MCF 10A (cell line): ENCODE measurements at regions of chr22 and their contacts with region 1.

Region 1: DNA sequence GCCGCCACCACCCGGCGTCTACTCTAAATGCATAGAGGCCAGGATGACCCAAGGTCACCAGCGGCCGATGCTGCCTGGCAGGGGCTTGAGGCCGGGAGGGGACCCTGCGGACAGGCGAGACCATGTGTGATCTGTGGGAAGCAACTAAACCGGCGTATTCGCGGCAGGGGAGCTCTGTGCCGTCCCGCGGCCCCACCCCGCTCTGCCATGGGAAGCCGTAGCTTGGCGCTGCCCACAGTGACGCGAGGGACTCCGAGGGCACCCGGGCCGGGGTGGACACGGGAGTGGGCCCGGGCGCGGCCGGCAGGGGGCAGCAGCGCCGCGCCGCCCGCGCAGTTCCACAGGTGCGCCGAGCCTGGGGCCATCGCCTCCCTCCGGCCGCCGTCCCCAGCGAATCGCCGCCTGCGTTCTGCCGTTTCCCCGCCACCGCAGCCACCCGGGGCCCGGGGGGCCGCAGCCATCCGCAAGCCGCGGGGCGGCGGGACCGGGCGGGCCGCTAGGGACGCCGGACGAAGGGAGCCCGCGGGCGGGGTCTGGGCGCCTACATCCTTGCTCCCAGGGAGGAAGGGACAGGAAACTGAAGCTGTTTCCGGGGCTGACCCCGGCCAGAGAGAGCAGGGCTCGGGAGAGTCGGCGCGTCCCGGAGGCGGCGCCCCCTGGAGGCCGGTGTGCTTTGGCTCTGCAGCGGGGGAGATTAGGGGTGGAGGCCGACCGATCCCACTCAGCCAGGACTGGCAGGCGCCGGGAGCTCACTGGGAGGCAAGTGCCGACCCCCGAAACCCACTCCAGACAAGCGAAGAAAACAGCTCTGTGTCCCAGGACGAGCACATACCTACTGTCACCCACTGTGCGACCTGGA is 12.5 kb upstream of the HDHD5 start:
- DNase-seq: peak; percentile 87
- H3K4me3 Mint-ChIP-seq: peak overlapping the region; percentile 91
- H3K27ac Mint-ChIP-seq: peak overlapping the region; percentile 99
- H3K4me1 Mint-ChIP-seq: peaks cover 6% of the 10 kb centered on the region
- H3K27me3 Mint-ChIP-seq: no peaks in the 10 kb centered on the region
- CTCF ChIP-seq: peak; percentile 56

Region 2: DNA sequence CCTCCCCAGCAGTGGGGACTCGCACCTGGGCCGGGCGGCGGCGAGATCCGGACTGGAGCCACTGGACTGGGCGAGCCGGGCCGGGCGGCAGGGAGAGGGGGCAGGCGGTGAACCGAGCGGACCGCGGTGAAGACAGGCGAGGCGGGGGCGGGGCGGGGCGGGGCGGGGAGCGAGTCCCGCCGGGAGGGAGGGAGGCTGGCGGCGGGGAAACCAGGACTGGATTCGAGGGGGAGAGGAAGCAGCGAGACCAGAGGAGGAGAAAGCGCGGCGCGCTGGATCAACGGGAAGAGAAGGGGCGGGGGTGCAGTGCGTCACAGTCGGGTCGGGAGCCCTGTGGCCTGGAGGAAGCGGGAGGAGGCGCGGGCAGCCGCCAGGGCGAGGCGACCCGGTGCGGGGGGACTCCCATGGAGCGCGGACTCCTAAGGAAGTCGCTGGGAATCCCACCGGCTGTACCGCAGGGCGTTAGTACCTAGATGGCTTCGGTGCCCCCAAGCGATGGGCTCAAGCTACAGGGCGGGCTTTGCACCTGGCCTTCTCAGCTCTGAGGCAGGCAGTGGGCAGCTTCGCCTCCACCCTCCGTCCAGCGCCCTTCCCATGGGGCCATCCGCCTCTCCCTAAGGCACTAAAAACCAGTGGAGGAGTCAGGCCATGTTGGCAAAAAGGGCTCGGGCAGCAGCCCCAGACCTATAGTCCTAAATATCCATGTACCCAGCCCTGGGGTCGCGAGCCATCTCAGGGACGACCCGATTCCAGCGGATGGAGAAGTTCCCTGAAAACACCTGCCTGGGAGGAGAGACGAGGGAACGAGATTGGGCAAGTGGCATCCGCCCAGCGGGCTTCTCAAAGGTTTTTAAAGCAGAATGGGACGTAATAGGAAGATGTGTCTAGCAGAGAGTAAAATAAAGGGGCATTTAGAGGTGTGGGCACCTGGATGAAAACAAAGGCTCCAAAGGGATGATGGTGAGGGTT is 50.0 kb before region 1 on chr22 and contains the start of gene TMEM121B:
- CTCF ChIA-PET with region 1: interaction called, 11 read pairs
- POLR2A ChIA-PET with region 1: no interaction called
- intact Hi-C with region 1: no loop called
- DNase-seq: no peak
- H3K4me3 Mint-ChIP-seq: no peak within 1 kb of the TSS
- H3K27ac Mint-ChIP-seq: no peak within 1 kb of the TSS
- H3K4me1 Mint-ChIP-seq: no peaks in the 10 kb centered on the region
- H3K27me3 Mint-ChIP-seq: peaks cover 24% of the 10 kb centered on the region
- CTCF ChIP-seq: no peak
- total RNA-seq, gene TMEM121B: 0.07 TPM in 1 of 2 replicates, not detected in the other

Region 3: DNA sequence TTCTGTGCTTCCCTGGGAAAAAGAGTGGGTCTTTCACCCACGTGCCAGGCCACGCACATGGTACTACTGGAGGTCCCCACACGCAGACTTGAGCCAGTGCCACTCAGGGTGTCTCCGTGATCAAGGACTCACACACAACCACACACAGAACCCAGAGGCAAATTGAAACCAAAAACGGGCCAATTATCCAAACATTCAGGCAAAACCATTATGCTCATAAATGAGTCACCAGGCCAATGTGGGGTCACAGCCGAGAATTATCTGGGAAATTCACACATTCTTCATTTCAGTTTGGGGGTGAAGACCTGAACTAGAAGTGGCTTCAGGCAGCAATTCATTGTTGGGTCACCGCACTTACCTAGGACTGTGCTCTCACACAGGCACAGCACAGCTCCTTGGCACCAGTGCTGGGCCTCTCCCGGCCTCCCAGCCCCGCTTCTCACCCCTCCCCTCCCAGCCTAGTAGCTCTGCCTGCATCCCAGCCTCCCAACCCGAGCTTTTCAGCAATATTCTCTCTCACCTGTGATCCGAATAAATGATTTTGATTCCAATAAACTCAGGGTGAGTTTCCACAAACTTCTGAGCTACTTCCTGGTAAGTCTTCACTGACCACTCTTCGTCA is 19.7 kb after region 1 on chr22:
- CTCF ChIA-PET with region 1: interaction called, 76 read pairs
- POLR2A ChIA-PET with region 1: no interaction called
- intact Hi-C with region 1: no loop called
- DNase-seq: peak; percentile 21
- H3K4me3 Mint-ChIP-seq: no peak overlapping the region
- H3K27ac Mint-ChIP-seq: no peak overlapping the region
- H3K4me1 Mint-ChIP-seq: no peaks in the 10 kb centered on the region
- H3K27me3 Mint-ChIP-seq: no peaks in the 10 kb centered on the region
- CTCF ChIP-seq: no peak

Region 4: GRCh38 chr22:17281440-17281841 is 109.9 kb after region 1 on chr22:
- CTCF ChIA-PET with region 1: interaction called, 13 read pairs
- POLR2A ChIA-PET with region 1: no interaction called
- intact Hi-C with region 1: no loop called
- DNase-seq: no peak
- H3K4me3 Mint-ChIP-seq: no peak overlapping the region
- H3K27ac Mint-ChIP-seq: no peak overlapping the region
- H3K4me1 Mint-ChIP-seq: no peaks in the 10 kb centered on the region
- H3K27me3 Mint-ChIP-seq: no peaks in the 10 kb centered on the region
- CTCF ChIP-seq: no peak

Region 5: DNA sequence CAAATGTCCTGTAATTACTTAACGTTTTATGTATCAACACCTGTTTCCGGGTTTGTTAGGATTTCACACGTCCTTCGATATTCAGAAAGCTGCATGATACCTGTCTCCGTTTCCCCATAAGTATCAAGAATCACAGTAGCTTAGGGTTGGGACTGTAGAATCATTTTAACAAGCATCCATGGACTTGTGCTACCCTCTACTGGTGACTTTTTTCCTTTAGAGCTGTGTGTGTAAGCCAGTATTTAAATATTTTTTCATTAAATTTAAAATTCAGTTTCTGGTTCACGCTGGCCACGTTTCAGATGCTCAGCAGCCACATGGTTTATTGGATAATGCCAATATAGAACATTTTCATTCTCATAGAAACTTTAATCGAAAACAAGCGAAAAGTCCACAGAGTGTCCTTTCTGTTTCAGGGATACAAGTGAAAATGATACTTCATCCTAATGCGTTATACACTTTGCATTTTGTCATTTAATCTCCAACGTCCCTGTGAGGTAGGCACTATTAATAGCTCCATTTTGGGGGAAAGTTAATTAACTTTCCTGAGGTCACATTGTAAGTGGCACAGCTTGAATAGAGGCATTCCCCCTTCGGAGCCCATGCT is 330.2 kb after region 1 on chr22:
- CTCF ChIA-PET with region 1: interaction called, 189 read pairs
- POLR2A ChIA-PET with region 1: interaction called, 38 read pairs
- intact Hi-C with region 1: loop called (anchors 1 kb)
- DNase-seq: peak; percentile 79
- H3K4me3 Mint-ChIP-seq: no peak overlapping the region
- H3K27ac Mint-ChIP-seq: no peak overlapping the region
- H3K4me1 Mint-ChIP-seq: peaks cover 13% of the 10 kb centered on the region
- H3K27me3 Mint-ChIP-seq: no peaks in the 10 kb centered on the region
- CTCF ChIP-seq: peak; percentile 76